ENCODE measurements at regions of chr15 and their contacts with region 1.

Region 1: DNA sequence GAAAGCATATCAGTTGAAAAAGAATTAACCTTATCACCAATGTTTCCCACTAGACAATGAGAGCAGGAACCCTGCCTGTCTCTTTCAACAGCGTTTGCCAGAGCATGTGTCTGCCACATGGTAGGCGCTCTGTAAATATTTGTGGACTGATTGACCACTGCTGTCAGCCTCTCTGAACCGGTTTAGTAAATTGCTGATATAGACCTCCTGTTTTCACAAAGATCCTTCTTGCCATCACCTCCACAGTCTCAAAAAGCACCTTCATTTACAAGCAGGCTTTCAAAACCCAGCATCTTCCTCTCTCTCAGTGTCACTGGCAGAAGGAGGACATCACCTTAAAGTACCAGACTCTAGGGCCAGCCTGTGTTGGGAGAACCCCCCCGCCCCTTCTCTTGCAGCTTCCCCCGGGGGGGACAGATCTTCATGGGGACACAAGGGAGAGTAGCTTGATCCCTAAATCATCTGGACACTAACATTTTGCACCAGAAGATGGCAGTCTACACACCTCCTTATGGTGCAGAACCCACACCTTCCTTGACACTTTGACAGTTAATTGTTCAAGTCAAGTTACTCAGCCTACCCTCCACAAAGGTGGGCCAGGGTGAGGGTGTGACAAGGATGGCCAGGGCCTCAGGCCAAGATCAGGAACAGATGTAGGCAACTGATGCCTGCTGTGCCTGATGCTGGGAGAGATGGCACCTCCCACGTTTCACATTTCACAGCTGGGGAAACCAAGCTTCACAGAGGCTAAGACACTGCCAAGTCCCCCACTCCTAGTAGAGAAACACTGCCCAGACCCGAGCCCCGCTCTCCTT is 37.8 kb upstream of the USP3 start:
- DNase-seq: peak; percentile 88 to 91
- ATAC-seq: peak; percentile 82 to 89
- H3K4me3 ChIP-seq: no peak overlapping the region
- H3K27ac ChIP-seq: peak overlapping the region; percentile 46 to 70
- H3K4me1 ChIP-seq: peaks cover 47% of the 10 kb centered on the region
- CTCF ChIP-seq: peak; percentile 95
- EP300 ChIP-seq: no peak
- POLR2A ChIP-seq: no peak
- RAD21 ChIP-seq: peak; percentile 96 to 97

Region 2: DNA sequence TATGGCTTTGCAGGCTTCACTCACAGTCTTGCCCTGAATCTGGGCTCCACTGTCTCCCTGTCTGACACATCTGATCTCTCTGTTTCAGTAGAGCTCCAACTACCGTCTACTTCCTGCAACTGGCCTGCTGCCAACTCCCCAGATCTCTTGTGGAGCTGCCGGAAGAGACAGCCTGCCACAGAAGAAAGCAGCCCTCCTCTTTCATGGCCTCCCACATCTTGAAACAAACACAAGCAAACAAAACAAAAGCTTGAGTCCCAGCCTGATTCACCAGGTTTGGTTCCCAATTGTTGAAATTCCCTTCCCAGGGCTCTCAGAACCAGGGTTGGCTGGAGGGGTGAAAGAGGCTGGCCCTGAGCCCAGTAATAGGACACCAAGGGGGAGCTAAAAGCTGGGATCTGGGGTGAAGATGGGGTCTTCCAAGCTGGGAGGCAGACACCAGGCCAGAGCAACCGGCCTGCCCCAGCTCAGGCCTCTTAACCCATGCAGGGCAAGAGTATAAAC is 29.7 kb before region 1 on chr15:
- CTCF ChIA-PET with region 1: interaction called, 44 read pairs
- POLR2A ChIA-PET with region 1: no interaction called
- DNase-seq: peak; percentile 35 to 75
- ATAC-seq: peak; percentile 68 to 85; a peak in 5 of 6 replicates
- H3K4me3 ChIP-seq: no peak overlapping the region
- H3K27ac ChIP-seq: peak overlapping the region; percentile 71 to 84
- H3K4me1 ChIP-seq: peaks cover 17% of the 10 kb centered on the region
- CTCF ChIP-seq: no peak; the same call in 2 of the 3 replicates
- EP300 ChIP-seq: no peak
- POLR2A ChIP-seq: no peak
- RAD21 ChIP-seq: no peak

Region 3: DNA sequence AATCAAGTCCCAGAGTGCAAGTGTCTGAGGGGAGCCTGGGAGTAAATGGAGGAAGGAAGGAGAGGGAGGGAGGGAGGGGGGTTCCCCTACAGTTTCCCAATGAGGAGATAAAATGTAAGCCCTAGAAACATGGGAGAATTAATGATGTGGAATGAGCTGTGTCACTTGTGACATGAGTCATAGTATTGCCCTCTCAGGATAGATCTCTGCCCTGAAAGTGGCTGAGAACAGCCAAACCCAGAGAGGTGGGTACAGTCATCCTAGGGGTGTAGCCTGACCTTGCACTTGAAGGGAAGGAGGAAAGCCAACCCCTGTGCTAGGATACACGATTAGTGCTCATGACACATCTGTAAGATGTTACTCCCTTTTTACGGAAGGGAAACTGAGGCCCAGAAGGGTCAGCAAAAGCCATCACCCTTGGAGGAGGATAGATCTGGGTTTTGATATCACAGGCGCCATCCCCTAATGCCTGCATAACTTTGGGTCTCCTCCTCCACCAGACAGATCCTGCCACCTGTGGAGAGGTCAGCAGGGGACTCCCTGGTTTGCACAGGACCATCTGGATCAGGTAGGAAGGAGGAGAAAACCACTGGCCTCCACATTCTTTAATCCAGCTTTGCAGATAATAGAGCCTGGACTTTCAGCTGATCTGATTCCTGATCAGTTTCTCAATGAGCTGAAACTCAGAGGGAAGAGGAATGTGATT is 14.7 kb after region 1 on chr15:
- CTCF ChIA-PET with region 1: interaction called, 66 read pairs
- POLR2A ChIA-PET with region 1: no interaction called
- DNase-seq: peak; percentile 54 to 57
- ATAC-seq: peak; percentile 25 to 49; a peak in 5 of 6 replicates
- H3K4me3 ChIP-seq: no peak overlapping the region
- H3K27ac ChIP-seq: peak overlapping the region; percentile 50 to 70
- H3K4me1 ChIP-seq: peaks cover 86% of the 10 kb centered on the region
- CTCF ChIP-seq: no peak
- EP300 ChIP-seq: no peak
- POLR2A ChIP-seq: no peak
- RAD21 ChIP-seq: no peak

Region 4: GRCh38 chr15:63504247-63504978 is 37.8 kb after region 1 on chr15 and contains the start of gene USP3:
- CTCF ChIA-PET with region 1: interaction called, 127 read pairs
- POLR2A ChIA-PET with region 1: interaction called, 17 read pairs
- DNase-seq: peak; percentile 67 to 97
- ATAC-seq: peak; percentile 52 to 73
- H3K4me3 ChIP-seq: peak within 1 kb of the TSS; percentile 77
- H3K27ac ChIP-seq: peak within 1 kb of the TSS; percentile 99
- H3K4me1 ChIP-seq: peaks cover 64% of the 10 kb centered on the region
- CTCF ChIP-seq: peak; percentile 30; the same call in 1 of the 3 replicates
- EP300 ChIP-seq: no peak; a peak in 1 of 5 replicates
- POLR2A ChIP-seq: peak; percentile 47
- RAD21 ChIP-seq: peak in 1 of 2 experiments; percentile 73
- polyA plus RNA-seq, gene USP3: 97.4 and 99.1 TPM in 2 replicates

Region 5: GRCh38 chr15:63539521-63539920 is 72.9 kb after region 1 on chr15:
- CTCF ChIA-PET with region 1: interaction called, 14 read pairs
- POLR2A ChIA-PET with region 1: no interaction called
- DNase-seq: no peak
- ATAC-seq: peak in 1 of 2 experiments; percentile 25; a peak in 1 of 6 replicates
- H3K4me3 ChIP-seq: no peak overlapping the region
- H3K27ac ChIP-seq: no peak overlapping the region
- H3K4me1 ChIP-seq: peaks cover 48% of the 10 kb centered on the region
- CTCF ChIP-seq: no peak
- EP300 ChIP-seq: no peak
- POLR2A ChIP-seq: no peak
- RAD21 ChIP-seq: no peak

Region 6: GRCh38 chr15:63582718-63583426 is 116.3 kb after region 1 on chr15:
- CTCF ChIA-PET with region 1: interaction called, 12 read pairs
- POLR2A ChIA-PET with region 1: no interaction called
- DNase-seq: peak in 1 of 2 experiments; percentile 34
- ATAC-seq: peak; percentile 38 to 54
- H3K4me3 ChIP-seq: no peak overlapping the region
- H3K27ac ChIP-seq: no peak overlapping the region
- H3K4me1 ChIP-seq: peaks cover 24% of the 10 kb centered on the region
- CTCF ChIP-seq: no peak
- EP300 ChIP-seq: no peak
- POLR2A ChIP-seq: no peak
- RAD21 ChIP-seq: no peak

Region 7: DNA sequence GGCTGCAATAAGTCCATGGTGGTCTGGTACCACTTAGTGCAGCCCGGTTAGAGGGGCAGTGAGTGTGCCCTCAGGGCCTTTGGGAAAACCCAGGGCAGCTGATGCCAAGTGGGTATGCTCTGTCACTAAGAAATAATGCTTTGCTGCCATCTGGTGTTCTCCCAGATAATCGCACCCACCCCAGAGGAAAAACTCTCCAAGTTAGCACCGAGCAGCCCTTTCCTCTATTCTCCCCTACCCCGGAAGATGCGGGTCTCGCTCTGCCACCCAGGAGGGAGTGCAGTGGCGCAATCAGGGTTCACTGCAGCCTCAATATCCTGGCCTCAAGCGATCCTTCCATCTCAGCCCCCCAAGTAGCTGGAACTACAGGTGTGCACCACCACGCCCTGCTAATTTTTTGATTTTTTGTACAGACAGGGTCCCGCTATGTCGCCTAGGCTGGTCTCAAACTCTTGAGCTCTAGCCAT is 601.0 kb after region 1 on chr15:
- CTCF ChIA-PET with region 1: interaction called, 10 read pairs
- POLR2A ChIA-PET with region 1: no interaction called
- DNase-seq: peak; percentile 61 to 80
- ATAC-seq: peak; percentile 77 to 88
- H3K4me3 ChIP-seq: no peak overlapping the region
- H3K27ac ChIP-seq: peak overlapping the region in 1 of 2 experiments; percentile 44; a peak in 2 of 6 replicates
- H3K4me1 ChIP-seq: peaks cover 24% of the 10 kb centered on the region
- CTCF ChIP-seq: peak; percentile 93
- EP300 ChIP-seq: no peak
- POLR2A ChIP-seq: no peak
- RAD21 ChIP-seq: peak; percentile 97 to 98

Measured in A549 (cell line).